ENCODE measurements at regions of chr3 and their contacts with region 1.

Region 1: GRCh38 chr3:136353461-136353860 is 103.3 kb downstream of the PCCB start:
- DNase-seq: no peak
- H3K4me3 ChIP-seq: no peak overlapping the region
- H3K27ac ChIP-seq: no peak overlapping the region
- H3K4me1 ChIP-seq: no peaks in the 10 kb centered on the region
- CTCF ChIP-seq: no peak

Region 2: GRCh38 chr3:136366289-136366688 is 12.8 kb after region 1 on chr3:
- CTCF ChIA-PET with region 1: no interaction called
- POLR2A ChIA-PET with region 1: interaction called, 10 read pairs
- intact Hi-C with region 1: no loop called
- DNase-seq: no peak
- H3K4me3 ChIP-seq: no peak overlapping the region
- H3K27ac ChIP-seq: no peak overlapping the region
- H3K4me1 ChIP-seq: peaks cover 4% of the 10 kb centered on the region
- CTCF ChIP-seq: no peak

Measured in OCI-LY7 (cell line).